ENCODE measurements at regions of chr12 and their contacts with region 1.

Region 1: GRCh38 chr12:26455936-26456574 is 260.7 kb downstream of the SSPN start:
- DNase-seq: no peak
- ATAC-seq: no peak

Region 2: DNA sequence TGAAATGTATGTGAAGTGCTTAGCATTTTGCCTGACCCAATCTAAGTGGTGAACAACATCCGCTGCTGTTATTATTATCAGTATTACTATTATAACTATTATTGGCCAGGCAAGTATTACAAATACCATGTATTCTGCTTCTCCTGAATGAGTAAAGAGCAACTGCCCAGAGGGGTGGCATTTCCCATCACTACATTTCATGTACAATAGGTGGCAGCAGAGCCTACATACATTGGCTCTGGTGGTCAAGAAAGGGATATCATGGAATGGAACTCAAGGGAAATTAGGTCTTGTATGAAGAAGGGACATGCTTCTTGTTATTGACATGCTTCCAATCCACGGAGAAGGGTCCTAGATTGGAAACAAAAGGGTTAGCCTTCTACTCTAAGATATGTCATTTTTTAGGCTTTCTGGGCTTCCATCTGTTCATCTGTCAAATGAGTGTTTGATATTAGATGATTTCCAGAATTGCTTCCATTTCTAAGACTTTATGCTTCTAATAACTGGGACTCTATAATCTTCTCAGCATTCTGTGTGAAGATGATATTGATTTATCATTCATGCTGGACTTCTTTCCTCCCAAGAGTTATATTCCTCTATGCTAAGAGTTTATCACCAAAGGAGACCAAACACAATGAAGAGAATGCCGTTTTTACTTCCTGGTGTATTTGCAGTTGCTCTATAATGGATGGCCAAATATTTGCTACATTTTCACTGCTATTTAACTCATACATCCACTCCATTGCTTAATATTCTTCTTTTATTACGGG is 21.6 kb before region 1 on chr12:
- intact Hi-C with region 1: no loop called
- DNase-seq: no peak
- ATAC-seq: peak; percentile 71

Region 3: GRCh38 chr12:26493656-26494055 is 37.6 kb after region 1 on chr12:
- intact Hi-C with region 1: loop called (anchors 1 kb)
- DNase-seq: no peak
- ATAC-seq: no peak

Region 4: DNA sequence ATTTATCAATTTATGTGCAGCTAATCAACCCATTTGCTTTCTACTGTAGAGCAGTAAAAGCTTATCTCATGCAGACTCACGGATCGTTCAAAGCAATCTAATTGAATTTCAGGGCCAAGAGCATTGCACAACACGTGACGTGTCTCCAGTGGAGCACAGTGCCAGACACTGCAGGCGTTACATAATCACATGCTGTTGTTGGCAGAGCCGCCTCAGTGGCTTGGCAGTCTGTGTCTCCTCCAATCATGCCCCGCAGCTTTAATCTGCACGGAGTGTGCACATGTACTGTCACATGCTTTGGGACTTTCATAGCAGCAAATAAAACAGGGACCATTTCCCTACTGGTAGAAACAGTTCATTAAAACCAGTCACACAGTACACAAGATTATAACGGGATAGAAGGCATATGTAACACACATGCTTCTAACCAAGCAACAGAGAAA is 67.7 kb after region 1 on chr12:
- intact Hi-C with region 1: no loop called
- DNase-seq: peak; percentile 90
- ATAC-seq: peak; percentile 100